ENCODE measurements at regions of chr1 and their contacts with region 1.

Region 1: GRCh38 chr1:155744711-155745283 is 55.9 kb downstream of the DAP3 start:
- DNase-seq: no peak
- ATAC-seq: no peak
- H3K4me3 ChIP-seq: peak overlapping the region; percentile 67
- H3K4me3 Mint-ChIP-seq: peak overlapping the region; percentile 94
- H3K27ac ChIP-seq: peak overlapping the region; percentile 69 to 72
- H3K27ac Mint-ChIP-seq: peak overlapping the region; percentile 89
- H3K4me1 ChIP-seq: peaks cover 6% of the 10 kb centered on the region
- H3K4me1 Mint-ChIP-seq: peaks cover 12% of the 10 kb centered on the region
- H3K27me3 ChIP-seq: no peaks in the 10 kb centered on the region
- H3K27me3 Mint-ChIP-seq: no peaks in the 10 kb centered on the region
- CTCF ChIP-seq: no peak

Region 2: GRCh38 chr1:155688324-155689080 is 56.3 kb before region 1 on chr1 and contains the start of gene YY1AP1:
- CTCF ChIA-PET with region 1: no interaction called
- POLR2A ChIA-PET with region 1: no interaction called
- intact Hi-C with region 1: loop called (anchors 10 kb)
- DNase-seq: peak; percentile 80 to 94 (median 89)
- ATAC-seq: peak; percentile 85
- H3K4me3 ChIP-seq: peak within 1 kb of the TSS; percentile 73
- H3K4me3 Mint-ChIP-seq: peak within 1 kb of the TSS; percentile 98
- H3K27ac ChIP-seq: peak within 1 kb of the TSS; percentile 89 to 92
- H3K27ac Mint-ChIP-seq: peak within 1 kb of the TSS; percentile 95
- H3K4me1 ChIP-seq: peaks cover 31% of the 10 kb centered on the region
- H3K4me1 Mint-ChIP-seq: peaks cover 46% of the 10 kb centered on the region
- H3K27me3 ChIP-seq: no peaks in the 10 kb centered on the region
- H3K27me3 Mint-ChIP-seq: no peaks in the 10 kb centered on the region
- CTCF ChIP-seq: no peak
- total RNA-seq, gene YY1AP1: 71.1 to 81.2 TPM

Measured in CD4-positive, alpha-beta T cell (primary cell).